Activated CD4-positive, alpha-beta memory T cell treated with anti-CD3 and anti-CD28 coated beads, Interleukin-2, amount 10 ng/mL, durations not matched to agents 7 days and 5 days (primary cell): ENCODE measurements at regions of chr14 and their contacts with region 1.

Region 1: GRCh38 chr14:76962303-76962660 is 66.2 kb downstream of the IRF2BPL start:
- DNase-seq: no peak
- H3K4me3 Mint-ChIP-seq: peak overlapping the region; percentile 57
- H3K27ac Mint-ChIP-seq: peak overlapping the region; percentile 92
- H3K4me1 Mint-ChIP-seq: peaks cover 77% of the 10 kb centered on the region
- H3K27me3 Mint-ChIP-seq: peaks cover 47% of the 10 kb centered on the region

Region 2: DNA sequence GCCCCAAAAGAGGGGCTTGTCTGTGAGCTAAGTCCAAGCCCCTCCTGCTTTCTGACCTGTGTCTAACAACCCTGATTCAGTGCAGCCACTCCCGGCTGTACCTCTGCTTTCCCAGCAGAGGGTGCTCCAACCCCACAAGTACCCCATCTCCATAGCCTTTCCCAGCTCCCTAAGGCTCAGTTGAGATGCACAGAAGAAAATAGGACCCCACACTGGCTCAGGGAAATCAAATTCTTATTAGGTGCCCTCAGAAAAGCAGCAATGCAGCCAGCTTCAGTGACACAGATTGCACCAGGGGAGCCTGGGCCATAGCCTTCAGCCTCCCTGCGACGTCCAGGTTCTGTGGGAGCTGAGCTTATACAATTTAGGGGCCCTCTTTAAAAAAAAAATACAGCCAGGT is 86.2 kb before region 1 on chr14:
- CTCF ChIA-PET with region 1: interaction called, 11 read pairs
- POLR2A ChIA-PET with region 1: interaction called, 3 read pairs
- DNase-seq: peak; percentile 57
- H3K4me3 Mint-ChIP-seq: no peak overlapping the region
- H3K27ac Mint-ChIP-seq: no peak overlapping the region
- H3K4me1 Mint-ChIP-seq: no peaks in the 10 kb centered on the region
- H3K27me3 Mint-ChIP-seq: peaks cover 4% of the 10 kb centered on the region

Region 3: GRCh38 chr14:76926521-76927251 is 35.6 kb before region 1 on chr14:
- CTCF ChIA-PET with region 1: interaction called, 9 read pairs
- POLR2A ChIA-PET with region 1: interaction called, 39 read pairs
- DNase-seq: peak; percentile 77
- H3K4me3 Mint-ChIP-seq: peak overlapping the region; percentile 41
- H3K27ac Mint-ChIP-seq: peak overlapping the region; percentile 90
- H3K4me1 Mint-ChIP-seq: peaks cover 83% of the 10 kb centered on the region
- H3K27me3 Mint-ChIP-seq: peaks cover 7% of the 10 kb centered on the region

Region 4: DNA sequence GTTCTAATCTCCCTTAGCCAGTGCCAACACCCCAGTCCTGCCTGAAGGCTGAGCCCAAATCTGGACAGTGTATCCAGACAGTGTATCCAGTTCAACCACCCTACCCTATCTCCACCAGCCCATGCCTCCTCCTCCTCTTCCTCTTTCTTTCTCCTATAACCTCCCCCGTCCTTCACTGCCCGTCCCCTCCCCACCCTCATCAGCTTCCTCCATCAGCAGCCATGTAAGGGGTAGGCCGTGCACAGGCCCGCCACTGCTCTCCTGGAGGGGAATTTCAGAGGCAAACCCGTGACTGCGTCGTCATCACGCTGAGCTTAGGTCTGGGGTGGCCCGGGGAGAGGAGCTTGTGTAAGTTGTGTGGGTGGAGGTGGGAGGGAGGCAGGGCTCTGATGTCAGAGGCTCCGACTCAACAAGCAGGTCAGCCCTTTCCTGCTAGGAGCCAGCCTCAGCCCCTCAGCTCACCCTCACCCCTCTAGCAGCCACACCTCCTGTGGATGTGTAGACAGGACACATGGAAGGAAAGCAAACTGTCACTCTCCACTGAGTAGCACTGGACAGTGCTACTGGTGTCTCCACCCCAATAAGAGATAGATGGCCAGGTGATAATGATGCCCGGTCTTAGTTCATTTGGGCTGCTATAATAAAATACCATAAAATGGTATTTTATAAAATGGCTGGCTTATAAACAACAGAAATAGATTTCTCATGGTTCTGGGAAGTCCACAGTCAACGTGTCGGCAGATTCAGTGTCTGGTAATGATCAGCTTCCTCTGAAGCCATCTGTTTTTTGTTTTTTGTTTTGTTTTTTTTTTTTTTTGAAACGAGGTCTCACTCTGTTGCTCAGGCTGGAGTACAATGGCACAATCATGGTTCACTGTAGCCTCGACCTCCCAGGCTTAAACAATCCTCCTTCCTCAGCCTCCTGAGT is 15.8 kb after region 1 on chr14:
- CTCF ChIA-PET with region 1: interaction called, 12 read pairs
- POLR2A ChIA-PET with region 1: interaction called, 22 read pairs
- DNase-seq: peak; percentile 79
- H3K4me3 Mint-ChIP-seq: peak overlapping the region; percentile 13
- H3K27ac Mint-ChIP-seq: peak overlapping the region; percentile 66
- H3K4me1 Mint-ChIP-seq: peaks cover 17% of the 10 kb centered on the region
- H3K27me3 Mint-ChIP-seq: peaks cover 5% of the 10 kb centered on the region

Region 5: DNA sequence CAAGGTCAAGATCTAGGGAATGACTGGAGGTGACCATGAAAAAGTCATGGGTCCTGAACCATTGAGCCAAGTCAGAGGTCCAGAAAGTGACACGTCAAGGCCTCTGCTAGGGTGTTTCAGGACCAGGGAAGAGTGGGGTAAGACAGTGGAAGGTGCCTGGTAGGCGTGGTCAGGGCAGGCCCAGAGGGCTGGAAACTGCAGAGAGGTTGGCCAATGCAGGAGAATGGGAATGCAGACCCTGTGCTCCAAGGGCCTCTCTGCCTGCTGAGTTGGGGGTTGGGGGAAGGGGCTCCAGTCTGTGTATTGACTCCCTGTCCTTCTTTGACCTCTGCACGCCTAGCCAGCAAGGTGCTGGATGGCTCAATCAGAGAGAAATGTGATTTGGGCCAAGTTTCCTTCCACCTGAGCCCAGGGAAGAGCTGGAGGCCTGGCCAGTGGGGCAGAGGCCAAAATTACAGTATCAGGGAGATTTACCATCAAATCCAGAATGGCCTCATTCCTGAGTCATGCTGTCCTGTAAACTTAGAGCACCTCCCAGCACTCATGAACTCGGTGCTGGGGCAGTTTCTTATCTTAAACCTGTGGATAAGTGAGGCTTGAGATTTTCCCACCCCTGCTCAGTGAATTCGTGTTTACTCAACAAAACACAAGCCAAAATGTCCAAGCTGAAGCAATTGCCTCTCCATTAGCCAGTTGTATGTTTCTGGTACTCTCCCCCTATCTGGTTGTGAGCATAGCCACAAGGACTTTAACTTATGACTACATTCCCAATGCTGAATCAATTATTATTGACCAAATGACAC is 41.9 kb after region 1 on chr14:
- CTCF ChIA-PET with region 1: no interaction called
- POLR2A ChIA-PET with region 1: no interaction called
- DNase-seq: no peak
- H3K4me3 Mint-ChIP-seq: no peak overlapping the region
- H3K27ac Mint-ChIP-seq: no peak overlapping the region
- H3K4me1 Mint-ChIP-seq: peaks cover 3% of the 10 kb centered on the region
- H3K27me3 Mint-ChIP-seq: peaks cover 3% of the 10 kb centered on the region

Region 6: GRCh38 chr14:77023001-77023996 is 61.0 kb after region 1 on chr14:
- CTCF ChIA-PET with region 1: interaction called, 15 read pairs
- POLR2A ChIA-PET with region 1: interaction called, 130 read pairs
- DNase-seq: peak; percentile 38
- H3K4me3 Mint-ChIP-seq: peak overlapping the region; percentile 61
- H3K27ac Mint-ChIP-seq: peak overlapping the region; percentile 84
- H3K4me1 Mint-ChIP-seq: peaks cover 46% of the 10 kb centered on the region
- H3K27me3 Mint-ChIP-seq: no peaks in the 10 kb centered on the region

Region 7: DNA sequence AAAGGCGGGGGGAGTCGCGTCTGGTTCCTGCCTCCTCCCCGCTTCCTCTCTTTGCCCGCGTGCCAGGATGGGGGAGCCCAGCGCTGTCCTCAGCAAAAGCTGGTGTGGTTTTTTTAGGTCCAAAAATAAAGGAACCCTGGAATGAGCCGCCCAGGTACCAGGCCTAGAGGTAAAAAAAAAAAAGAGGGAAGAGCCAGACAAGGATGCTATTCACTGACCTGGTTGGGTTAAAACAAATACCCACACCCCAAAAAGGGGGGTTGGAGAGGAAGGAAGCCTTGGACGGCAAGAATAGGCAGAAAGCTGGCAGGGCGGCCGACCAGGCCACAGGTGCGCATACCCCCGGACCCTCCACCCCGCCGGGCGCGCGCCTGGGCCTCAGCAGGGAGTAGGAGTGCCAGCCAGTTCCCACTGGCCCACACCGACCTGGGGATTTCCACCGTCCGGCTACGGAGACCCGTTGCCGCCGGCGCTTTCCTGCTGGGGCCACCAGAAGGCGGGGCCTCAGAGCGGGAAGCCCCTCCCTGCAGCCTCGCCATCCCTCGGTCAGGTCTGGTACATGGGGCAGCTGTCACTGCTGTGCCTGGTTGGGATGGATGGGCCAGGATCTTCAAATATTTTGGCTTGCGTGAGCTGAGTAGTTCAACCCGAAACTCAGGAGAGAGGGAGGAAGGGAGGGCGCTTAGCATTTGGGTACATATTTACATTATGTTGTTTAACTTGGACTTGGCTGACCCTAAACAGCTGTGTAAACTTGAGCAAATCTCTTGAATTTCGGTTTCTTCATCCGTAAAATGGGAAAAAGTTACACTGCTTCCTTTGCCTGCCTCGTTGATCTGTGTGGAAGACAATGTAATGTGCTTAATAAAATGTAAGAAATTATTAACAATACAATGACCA is 71.6 kb after region 1 on chr14:
- CTCF ChIA-PET with region 1: interaction called, 11 read pairs
- POLR2A ChIA-PET with region 1: interaction called, 130 read pairs
- DNase-seq: peak; percentile 83
- H3K4me3 Mint-ChIP-seq: peak overlapping the region; percentile 85
- H3K27ac Mint-ChIP-seq: peak overlapping the region; percentile 94
- H3K4me1 Mint-ChIP-seq: peaks cover 79% of the 10 kb centered on the region
- H3K27me3 Mint-ChIP-seq: no peaks in the 10 kb centered on the region

Region 8: DNA sequence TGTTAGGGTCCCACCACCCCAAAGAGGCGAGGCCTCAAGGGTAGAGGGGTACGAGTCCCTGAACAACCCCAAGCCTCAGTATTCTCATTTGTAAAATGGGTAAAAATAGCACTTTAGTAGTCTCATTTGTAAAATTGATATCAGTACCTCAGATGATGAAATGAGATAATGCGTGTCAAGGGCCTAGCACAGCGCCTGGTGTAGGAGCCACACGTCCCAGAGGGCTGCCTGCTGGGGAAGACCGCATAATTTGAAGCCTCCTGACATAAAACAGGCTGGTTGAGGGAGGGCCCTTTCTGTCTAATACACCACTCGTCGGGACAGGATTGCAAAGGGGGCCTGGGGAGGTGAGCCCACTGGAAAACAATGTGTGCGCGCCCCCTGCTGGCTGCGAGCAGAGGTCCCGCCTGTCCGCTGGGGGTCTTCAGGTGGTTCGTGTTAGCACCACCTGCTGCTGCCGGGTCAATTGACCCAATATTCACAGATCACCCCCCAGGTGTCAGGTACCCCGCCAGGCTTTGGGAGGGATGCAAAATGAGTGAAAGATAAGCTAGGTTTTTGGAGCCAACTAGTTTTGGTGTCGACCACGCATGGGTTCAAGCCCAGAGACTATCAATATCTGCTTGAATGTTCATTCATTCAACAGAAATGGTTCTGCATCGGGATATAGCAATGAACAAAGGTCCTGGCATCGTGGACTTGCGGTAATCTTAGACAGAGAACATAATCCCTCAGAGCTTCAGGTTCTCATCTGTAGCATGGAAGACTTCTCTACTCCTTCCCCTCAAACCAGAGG is 91.0 kb after region 1 on chr14:
- CTCF ChIA-PET with region 1: interaction called, 19 read pairs
- POLR2A ChIA-PET with region 1: interaction called, 11 read pairs
- DNase-seq: peak; percentile 71
- H3K4me3 Mint-ChIP-seq: no peak overlapping the region
- H3K27ac Mint-ChIP-seq: no peak overlapping the region
- H3K4me1 Mint-ChIP-seq: peaks cover 24% of the 10 kb centered on the region
- H3K27me3 Mint-ChIP-seq: peaks cover 2% of the 10 kb centered on the region

Region 9: GRCh38 chr14:77186911-77187648 is 224.8 kb after region 1 on chr14:
- CTCF ChIA-PET with region 1: no interaction called
- POLR2A ChIA-PET with region 1: no interaction called
- DNase-seq: no peak
- H3K4me3 Mint-ChIP-seq: no peak overlapping the region
- H3K27ac Mint-ChIP-seq: no peak overlapping the region
- H3K4me1 Mint-ChIP-seq: peaks cover 8% of the 10 kb centered on the region
- H3K27me3 Mint-ChIP-seq: peaks cover 14% of the 10 kb centered on the region